Heart right ventricle (tissue), 16 donors: ENCODE measurements at regions of chr14 and their contacts with region 1.

Region 1: DNA sequence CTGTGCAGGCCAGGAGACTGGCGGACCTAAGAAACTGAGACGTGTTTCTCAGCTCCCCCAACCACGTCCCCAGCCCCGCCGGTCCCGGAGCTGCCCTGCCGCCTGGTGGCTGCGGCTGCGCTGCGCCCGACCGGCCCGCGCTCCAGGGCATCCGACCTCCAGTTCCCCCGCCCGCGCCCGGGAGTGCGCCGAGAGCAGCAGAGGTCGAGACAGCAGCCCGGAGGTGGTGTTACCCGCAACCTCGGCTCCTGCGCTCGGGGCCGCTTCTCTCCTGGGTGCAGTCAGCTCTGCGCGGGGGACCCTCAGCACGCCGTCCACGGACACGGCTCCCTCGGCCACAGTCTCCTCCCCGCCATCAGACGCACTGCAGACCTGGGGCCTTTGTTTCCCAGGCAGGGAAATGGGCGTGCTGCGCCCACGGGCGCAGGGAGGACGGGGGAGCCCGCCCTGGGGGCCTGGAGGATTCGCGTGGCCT is 21.6 kb upstream of the GPR132 start:
- DNase-seq: peak; percentile 74 to 85
- ATAC-seq: peak; percentile 24 to 66 (median 52)
- H3K4me3 ChIP-seq: peak overlapping the region in 9 of 10 donors; percentile 42 to 62 (median 54)
- H3K27ac ChIP-seq: peak overlapping the region in 7 of 10 donors; percentile 15 to 73 (median 35)
- H3K4me1 ChIP-seq: peaks cover 11 to 48% (median 39%) of the 10 kb centered on the region in 9 donors
- H3K27me3 ChIP-seq: peaks cover 0 to 25% (median 8%) of the 10 kb centered on the region in 7 donors
- CTCF ChIP-seq: peak; percentile 65 to 93 (median 88)

Region 2: DNA sequence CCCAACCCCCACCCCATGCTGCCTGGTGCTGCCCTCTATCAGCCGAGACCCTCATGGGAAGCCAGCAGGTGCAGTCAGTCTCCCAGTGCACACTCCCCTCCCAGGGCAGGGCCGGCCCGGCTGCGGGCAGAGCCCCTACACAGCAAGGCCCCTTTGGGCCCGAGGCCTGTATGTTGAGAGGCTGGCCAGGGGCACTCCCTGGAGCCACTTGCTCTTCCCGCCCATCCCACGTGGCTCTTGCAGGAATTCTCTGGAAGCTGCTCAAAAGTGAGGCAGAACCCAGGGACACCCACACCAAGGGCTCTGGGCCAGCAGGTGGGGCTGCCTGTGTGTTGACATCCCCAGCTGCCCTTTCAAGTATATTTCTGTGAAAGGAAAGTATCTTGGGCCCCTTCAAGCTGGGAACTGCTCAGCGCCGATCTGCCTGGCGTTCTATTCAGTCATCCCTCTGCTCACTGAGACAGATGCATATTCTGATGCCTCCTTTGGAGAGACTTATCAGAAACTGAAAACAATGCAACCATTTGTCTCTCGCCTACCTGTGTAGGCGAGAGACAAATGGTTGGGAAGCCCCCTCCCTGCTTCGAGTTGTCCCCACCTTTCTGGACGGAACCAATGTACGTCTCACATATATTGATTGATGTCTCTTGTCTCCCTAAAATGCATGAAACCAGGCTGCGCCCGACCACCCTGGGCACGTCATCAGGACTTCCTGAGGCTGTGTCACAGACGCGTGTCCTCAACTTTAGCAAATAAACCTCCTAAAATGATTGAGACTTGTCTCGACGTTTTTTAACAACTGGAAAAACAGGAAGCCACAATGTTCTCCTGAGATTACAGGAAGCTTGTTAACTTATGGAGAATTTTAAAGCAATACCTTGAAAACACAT is 27.6 kb before region 1 on chr14:
- intact Hi-C with region 1: loop called in 1 of 10 experiments (anchors 2 kb)
- DNase-seq: peak in 1 of 2 donors; percentile 49
- ATAC-seq: peak in 6 of 8 donors; percentile 22 to 49 (median 29)
- H3K4me3 ChIP-seq: no peak overlapping the region
- H3K27ac ChIP-seq: peak overlapping the region in 8 of 10 donors; percentile 78 to 96 (median 85)
- H3K4me1 ChIP-seq: peaks cover 16 to 59% (median 48%) of the 10 kb centered on the region in 9 donors
- H3K27me3 ChIP-seq: peaks cover 0 to 15% (median 0%) of the 10 kb centered on the region in 7 donors
- CTCF ChIP-seq: peak in 4 of 9 donors; percentile 11 to 46 (median 24)

Region 3: DNA sequence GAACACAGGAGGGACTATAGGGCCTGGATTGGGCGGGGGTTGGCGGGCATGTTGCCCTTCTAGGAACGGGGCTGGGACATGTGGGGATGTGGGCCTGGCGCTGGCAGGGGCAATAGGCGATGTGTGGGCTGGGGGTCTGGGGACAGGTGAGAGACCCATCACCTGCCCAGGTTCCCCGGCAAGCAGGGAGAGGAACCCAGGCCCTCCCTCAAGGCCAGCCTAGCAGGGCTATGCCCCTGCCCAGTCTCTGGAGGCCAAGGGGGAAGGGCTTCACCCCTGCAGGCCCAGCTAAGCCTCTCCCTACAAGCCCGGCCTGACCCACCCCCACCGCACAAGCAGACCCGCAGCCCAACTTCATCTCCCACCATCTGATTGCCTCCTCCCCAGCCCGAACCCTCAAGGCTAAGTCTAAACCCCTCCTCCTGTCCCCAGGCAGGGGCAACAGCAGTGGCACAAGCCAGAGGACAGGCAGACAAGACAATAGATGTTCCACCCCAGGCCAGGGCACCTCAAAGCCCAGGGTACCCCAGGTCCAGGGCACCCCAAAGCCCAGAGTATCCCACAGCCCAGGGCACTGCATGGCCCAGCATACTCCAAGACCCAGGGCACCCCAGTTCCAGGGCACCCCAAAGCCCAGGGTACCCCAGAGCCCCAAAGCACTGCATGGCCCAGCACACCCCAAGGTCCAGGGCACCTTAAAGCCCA is 75.2 kb after region 1 on chr14:
- intact Hi-C with region 1: loop called in 6 of 10 experiments (anchors 5 to 10 kb)
- DNase-seq: no peak
- ATAC-seq: peak in 6 of 8 donors; percentile 23 to 73 (median 41)
- H3K4me3 ChIP-seq: no peak overlapping the region
- H3K27ac ChIP-seq: no peak overlapping the region
- H3K4me1 ChIP-seq: peaks cover 0 to 60% (median 23%) of the 10 kb centered on the region in 9 donors
- H3K27me3 ChIP-seq: peaks cover 0 to 12% (median 8%) of the 10 kb centered on the region in 7 donors
- CTCF ChIP-seq: no peak

Region 4: DNA sequence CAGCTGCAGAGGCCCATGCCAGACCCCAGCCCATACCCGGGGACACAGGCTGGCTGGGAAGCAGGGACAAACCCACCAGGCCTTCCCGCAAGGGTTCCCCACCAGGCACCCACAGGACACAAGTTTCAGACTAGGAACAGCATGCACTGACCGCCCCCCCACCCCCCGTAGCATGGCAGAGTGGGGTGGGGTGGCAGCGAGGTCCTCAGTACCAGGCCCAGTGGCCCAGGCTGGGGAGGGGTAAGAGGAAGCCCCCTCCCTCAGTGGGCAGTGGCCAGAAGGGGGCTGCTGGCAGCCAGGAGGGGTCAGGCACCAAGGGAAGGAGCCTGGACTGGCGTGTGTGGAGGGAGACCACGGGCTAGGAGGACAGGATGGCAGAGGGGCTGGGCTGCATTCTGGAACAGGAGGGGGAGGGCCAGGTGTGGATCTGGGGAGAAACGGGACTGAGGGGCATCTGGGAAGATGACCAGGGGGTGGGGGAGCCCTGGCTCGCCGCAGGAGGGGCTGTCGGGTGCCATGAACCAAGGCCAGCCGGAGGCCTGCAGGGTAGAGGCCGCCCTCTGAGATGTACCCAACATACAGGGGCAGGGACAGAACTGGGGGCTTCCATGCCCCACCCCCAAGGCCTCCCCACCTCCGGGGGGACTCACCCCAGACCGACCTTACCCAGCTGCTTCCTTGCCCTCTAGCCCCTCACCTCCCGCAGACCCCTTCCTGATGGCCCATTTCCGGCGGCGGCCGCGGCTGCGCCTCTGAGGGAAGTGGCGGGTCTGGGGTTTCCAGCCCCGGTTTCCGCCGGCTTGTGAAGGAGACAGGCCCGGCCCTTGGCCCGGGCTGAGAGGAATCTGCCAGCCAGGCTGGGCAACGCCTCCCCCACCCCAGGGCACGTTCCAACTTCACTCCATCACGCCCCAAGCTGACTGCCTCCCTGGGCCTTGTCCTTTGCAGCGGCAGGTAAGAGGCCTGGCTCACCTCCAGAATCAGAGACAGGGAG is 87.3 kb after region 1 on chr14:
- intact Hi-C with region 1: loop called in 6 of 10 experiments (anchors 5 to 10 kb)
- DNase-seq: no peak
- ATAC-seq: no peak
- H3K4me3 ChIP-seq: no peak overlapping the region
- H3K27ac ChIP-seq: no peak overlapping the region
- H3K4me1 ChIP-seq: peaks cover 15 to 34% (median 22%) of the 10 kb centered on the region in 9 donors
- H3K27me3 ChIP-seq: peaks cover 0 to 24% (median 0%) of the 10 kb centered on the region in 7 donors
- CTCF ChIP-seq: no peak

Region 5: GRCh38 chr14:105203057-105203531 is 116.2 kb after region 1 on chr14:
- intact Hi-C with region 1: loop called in 4 of 10 experiments (anchors 5 to 10 kb)
- DNase-seq: peak; percentile 72 to 84
- ATAC-seq: peak; percentile 26 to 67 (median 42)
- H3K4me3 ChIP-seq: no peak overlapping the region
- H3K27ac ChIP-seq: peak overlapping the region in 6 of 10 donors; percentile 23 to 84 (median 78)
- H3K4me1 ChIP-seq: peaks cover 30 to 92% (median 80%) of the 10 kb centered on the region in 9 donors
- H3K27me3 ChIP-seq: peaks cover 0 to 43% (median 2%) of the 10 kb centered on the region in 7 donors
- CTCF ChIP-seq: peak; percentile 90 to 98 (median 93)

Region 6: DNA sequence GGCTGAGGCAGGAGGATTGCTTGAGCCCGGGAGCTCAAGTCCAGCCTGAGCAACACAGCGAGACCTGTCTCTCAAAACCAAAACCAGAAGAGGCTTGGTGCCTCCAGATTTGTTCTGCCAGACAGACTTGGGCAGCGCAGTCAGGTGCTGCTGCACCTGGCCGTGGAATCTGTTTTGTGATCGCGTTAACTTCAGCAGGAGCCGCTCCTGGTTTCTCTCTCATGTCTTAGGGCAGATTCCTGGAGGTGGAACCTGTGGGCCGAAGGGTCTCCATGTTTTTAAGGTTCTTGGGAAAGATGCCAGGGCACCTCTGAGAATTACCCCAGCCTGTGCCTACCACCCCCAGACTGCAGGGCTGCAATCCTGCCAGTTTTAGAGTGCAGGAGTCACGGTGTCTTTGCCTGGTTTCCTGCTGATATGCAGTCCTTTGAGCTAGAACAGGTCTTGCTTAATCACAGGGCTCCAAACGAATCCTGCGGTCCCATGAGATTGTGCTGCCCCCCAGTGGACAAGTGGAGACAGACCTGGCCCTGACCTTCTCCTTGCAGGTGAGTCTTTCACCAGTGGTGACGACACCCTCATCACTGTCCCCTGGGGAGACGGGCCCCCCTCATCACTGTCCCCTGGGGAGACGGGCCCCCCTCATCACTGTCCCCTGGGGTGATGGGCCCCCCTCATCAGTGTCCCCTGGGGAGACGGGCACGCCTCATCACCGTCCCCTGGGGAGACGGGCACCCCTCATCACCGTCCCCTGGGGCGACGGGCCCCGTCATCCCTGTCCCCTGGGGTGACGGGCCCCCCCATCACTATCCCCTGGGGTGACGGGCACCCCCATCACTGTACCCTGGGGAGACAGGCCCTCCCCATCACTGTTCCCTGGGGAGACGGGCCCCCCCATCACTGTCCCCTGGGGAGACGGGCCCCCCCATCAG is 265.3 kb after region 1 on chr14:
- intact Hi-C with region 1: loop called in 7 of 10 experiments (anchors 2 to 10 kb)
- DNase-seq: peak; percentile 78 to 84
- ATAC-seq: peak; percentile 79 to 94 (median 89)
- H3K4me3 ChIP-seq: no peak overlapping the region
- H3K27ac ChIP-seq: peak overlapping the region in 5 of 10 donors; percentile 4 to 58 (median 30)
- H3K4me1 ChIP-seq: peaks cover 0 to 14% (median 6%) of the 10 kb centered on the region in 9 donors
- H3K27me3 ChIP-seq: no peaks in the 10 kb centered on the region
- CTCF ChIP-seq: peak; percentile 74 to 89 (median 86)